IMR-90 (cell line): ENCODE measurements at regions of chr1 and their contacts with region 1.

Region 1: DNA sequence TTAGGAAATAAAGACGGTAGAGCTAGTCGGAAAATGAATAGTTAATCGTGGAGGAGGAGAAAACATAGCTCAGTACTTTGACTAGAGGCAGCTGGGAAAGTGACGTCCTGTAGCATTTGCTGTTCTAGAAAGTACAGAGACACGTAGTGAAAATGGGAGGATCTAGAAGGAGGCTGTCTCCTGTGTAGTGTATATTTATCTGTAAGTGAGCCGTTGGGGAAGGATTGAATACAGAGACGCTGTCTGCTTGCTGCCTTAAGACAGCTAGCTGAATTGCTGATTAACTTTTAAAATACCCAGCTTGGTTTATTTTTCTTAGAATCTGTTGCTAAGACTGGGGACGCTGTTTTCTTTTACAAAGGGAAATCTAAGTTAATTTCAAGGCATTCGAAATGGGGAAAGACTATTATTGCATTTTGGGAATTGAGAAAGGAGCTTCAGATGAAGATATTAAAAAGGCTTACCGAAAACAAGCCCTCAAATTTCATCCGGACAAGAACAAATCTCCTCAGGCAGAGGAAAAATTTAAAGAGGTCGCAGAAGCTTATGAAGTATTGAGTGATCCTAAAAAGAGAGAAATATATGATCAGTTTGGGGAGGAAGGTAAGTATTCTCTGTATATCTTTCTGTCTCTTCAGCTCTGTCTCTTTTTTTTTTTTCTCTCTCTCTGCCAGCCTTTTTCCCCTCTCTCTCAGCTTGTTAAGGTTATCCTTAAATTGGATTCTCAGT is at the start of gene DNAJB4:
- DNase-seq: peak; percentile 99
- ATAC-seq: peak; percentile 93
- H3K4me3 ChIP-seq: peak within 1 kb of the TSS; percentile 80
- H3K27ac ChIP-seq: peak within 1 kb of the TSS; percentile 85
- H3K4me1 ChIP-seq: peaks cover 4% of the 10 kb centered on the region
- H3K27me3 ChIP-seq: no peaks in the 10 kb centered on the region
- CTCF ChIP-seq: no peak
- POLR2A ChIP-seq: peak; percentile 94
- RAD21 ChIP-seq: peak; percentile 3; the same call in 1 of the 2 replicates
- total RNA-seq, gene DNAJB4: 30.6 and 76.1 TPM in 2 replicates

Region 2: GRCh38 chr1:78102082-78102481 is 97.2 kb after region 1 on chr1:
- CTCF ChIA-PET with region 1: no interaction called
- POLR2A ChIA-PET with region 1: no interaction called
- dilution Hi-C with region 1: no loop called
- in situ Hi-C with region 1: no loop called
- intact Hi-C with region 1: loop called (anchors 1 kb)
- DNase-seq: peak; percentile 95
- ATAC-seq: peak; percentile 80
- H3K4me3 ChIP-seq: no peak overlapping the region
- H3K27ac ChIP-seq: peak overlapping the region; percentile 55
- H3K4me1 ChIP-seq: peaks cover 6% of the 10 kb centered on the region; the same call in 1 of the 2 replicates
- H3K27me3 ChIP-seq: no peaks in the 10 kb centered on the region
- CTCF ChIP-seq: no peak
- POLR2A ChIP-seq: no peak; the same call in 1 of the 2 replicates
- RAD21 ChIP-seq: no peak